ACHN (cell line): ENCODE measurements at regions of chr13 and their contacts with region 1.

Region 1: GRCh38 chr13:51435002-51435578 is 17.7 kb downstream of the INTS6 start:
- DNase-seq: peak; percentile 52

Region 2: GRCh38 chr13:51619614-51620013 is 184.5 kb after region 1 on chr13:
- in situ Hi-C with region 1: no loop called
- DNase-seq: no peak

Region 3: GRCh38 chr13:51729866-51730546 is 294.9 kb after region 1 on chr13:
- in situ Hi-C with region 1: loop called (anchors 25 kb)
- DNase-seq: peak; percentile 61